ENCODE measurements at regions of chr1 and their contacts with region 1.

Region 1: DNA sequence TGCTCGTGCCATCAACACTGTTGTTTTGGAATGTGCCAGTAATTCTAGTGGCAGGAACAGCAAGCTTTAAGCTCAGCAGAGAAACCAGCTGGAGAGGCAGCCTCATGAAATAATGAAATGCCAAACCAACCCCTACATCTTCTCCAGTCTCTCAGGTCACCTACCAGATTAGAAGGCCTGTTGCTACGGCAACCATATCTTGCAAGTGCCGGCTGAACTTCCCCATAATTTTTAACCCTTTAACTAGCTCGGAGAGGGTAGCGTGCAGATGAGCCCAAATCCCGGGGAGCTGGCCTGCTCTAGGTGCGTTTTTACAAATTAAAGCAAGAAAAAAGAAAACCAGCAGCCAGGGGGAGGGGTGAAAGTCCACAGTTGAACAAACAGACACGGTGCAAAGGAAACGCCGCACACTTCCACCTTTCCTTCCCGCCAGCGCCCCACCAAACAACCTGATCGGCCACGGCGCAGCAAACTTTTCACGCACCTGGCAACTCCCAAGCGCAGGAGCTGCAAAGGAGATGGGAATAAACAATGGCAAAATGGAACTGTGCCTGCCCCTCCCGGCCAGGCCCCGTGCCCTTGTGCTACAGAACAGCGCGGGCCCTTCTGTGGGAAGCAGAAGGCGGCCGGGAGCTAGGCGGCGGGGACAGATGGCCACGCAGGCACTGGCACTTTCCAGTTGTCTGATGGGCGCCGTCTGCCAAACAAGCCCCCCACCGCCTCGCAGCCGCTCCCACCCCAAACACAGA is 50.1 kb downstream of the SSBP3 start:
- DNase-seq: no peak
- ATAC-seq: no peak

Region 2: GRCh38 chr1:54273092-54273794 is 82.9 kb before region 1 on chr1:
- intact Hi-C with region 1: loop called (anchors 10 kb)
- DNase-seq: peak; percentile 72
- ATAC-seq: peak; percentile 57

Region 3: GRCh38 chr1:54297596-54298283 is 58.4 kb before region 1 on chr1:
- intact Hi-C with region 1: no loop called
- DNase-seq: no peak
- ATAC-seq: no peak